ENCODE measurements at regions of chr19 and their contacts with region 1.

Region 1: DNA sequence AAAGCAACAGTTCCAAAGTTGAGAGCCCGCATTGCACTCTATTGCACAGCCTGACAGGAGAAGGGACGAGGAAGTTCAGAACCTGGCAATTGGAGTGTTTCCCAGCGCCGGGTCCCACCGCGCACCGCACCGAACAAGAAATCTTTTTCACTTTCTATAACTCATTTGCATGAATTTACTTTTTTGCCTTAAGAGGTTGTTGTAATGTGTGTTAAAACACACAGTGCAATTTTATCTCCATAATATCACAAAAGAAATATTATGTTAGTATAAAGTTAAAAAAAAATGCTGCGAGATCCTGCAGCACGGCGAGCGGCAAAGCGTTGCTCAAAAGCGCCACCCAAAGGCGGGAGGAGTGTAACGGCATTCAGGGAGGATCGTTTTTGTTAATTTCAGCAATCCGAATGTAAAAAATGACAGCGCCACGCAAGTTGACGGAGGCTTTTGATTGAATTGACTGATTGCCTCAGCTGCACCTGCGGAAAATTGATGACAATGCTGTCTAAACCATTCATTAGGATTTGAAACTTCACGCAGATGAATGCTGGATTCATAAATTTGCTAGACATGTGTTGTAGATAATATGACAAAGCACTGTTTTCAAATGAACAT is 303.6 kb upstream of the ZNF507 start:
- DNase-seq: no peak

Region 2: DNA sequence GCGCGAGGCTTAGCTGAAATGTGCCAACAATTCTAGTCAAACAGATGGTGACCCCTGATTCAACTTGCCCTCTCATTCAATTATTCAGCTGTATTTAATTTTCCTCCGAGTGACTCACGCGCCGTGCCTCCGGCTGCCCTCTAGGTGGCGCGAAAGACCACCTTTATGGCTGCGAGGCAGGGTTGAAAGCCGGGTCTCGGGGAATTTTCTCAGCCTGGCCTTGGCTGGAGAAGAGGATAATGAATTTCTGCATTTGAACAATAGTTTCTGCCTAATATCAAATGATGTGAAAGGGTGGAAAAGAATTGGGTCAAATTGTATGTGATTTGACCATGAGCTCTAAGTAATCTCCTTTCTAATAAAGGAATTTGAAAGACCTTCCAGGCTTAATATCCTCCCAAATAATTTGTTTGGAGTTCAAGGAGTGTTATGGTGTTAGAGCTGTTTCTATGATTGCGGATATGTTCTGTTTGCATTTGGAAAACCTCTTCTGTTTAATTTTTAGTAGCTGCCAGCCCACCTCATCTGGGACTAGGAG is 1358.7 kb before region 1 on chr19:
- intact Hi-C with region 1: loop called (anchors 5 kb)
- DNase-seq: peak; percentile 81

Region 3: GRCh38 chr19:31676271-31677004 is 365.3 kb before region 1 on chr19:
- intact Hi-C with region 1: loop called (anchors 5 kb)
- DNase-seq: no peak

Measured in cardiac septum (tissue), 1 donor.